Heart right ventricle (tissue), 16 donors: ENCODE measurements at regions of chr16 and their contacts with region 1.

Region 1: DNA sequence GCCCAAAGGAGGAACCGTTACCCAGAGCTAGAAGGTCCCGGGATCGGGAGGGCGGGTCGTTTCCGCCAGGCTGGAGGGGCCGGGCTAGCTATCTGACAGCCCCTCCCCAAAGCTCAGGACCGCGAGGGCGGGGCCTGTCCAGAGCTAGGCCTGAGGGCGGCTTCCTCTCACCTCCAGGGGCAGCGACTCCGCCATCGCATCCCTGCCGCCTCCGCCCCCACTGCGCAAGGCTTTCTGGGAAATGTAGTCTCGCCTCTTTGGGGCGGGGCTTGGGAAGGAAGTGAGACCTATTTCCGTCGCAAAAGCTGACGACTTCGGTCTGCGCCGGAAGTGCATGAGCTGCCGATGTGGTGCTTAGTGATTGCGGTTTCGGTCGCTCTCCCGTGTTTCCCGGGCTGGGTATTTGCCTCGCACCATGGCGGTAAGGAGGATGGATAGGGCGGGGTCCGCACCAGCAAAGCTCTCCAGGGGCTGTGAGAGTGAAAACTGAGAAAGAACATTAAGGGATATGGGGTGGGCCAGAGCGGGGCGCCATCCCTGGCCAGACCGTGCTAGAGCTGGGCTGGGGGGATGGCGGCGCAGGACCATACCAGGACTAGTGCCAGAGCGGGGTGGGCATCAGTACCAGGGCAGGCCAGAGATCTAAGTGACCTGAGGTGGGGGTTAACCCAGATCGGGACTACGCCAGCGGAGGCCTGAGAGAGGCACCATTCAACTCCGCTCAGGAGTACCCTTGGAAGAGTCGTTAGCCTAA is at the start of gene TMEM208:
- DNase-seq: peak; percentile 97 to 98
- ATAC-seq: peak; percentile 94 to 98 (median 97)
- H3K4me3 ChIP-seq: peak within 1 kb of the TSS; percentile 70 to 99 (median 92)
- H3K27ac ChIP-seq: peak within 1 kb of the TSS; percentile 59 to 93 (median 88)
- H3K4me1 ChIP-seq: peaks cover 5 to 39% (median 29%) of the 10 kb centered on the region in 9 donors
- H3K27me3 ChIP-seq: no peaks in the 10 kb centered on the region
- CTCF ChIP-seq: peak in 4 of 9 donors; percentile 20 to 42 (median 31)
- total RNA-seq, gene TMEM208: 7.6 to 22.1 (median 11.7) TPM

Region 2: DNA sequence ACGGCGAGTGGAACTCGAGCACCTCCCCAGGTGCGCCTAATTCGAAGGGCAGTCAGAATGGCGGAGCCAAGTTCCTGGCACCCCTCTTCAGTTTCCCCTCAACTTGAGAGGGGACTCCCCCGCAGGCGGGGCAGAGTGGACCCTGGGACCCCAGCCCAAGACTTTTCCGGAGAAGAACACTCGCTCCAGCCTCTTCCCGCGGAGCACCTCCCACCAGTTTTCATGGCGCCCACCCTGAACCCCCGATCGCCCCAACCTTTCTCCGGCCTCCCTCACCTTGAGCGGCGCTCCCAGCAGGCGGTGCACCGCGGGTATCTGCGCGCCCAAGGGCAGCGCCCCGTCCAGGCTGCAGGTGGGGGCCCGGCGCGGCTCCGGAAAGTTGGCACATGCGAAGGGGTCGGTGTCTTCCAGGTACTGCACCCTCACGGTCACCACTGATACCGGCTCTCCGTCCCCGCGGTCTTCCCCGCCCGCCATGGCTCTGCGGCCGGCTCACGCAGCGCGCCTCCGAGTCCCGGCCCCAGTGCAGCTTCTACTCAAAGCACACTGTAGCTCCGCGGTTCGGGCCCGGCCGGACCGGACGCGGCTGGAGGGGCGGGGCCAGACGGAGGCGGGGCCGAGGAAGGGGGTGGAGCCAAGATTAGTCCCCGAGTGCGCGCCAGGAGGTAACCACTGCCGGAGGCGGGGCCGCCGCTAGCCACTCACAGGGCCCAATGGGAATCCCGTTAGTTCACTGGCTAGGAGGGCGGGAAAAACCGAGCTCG is 20.1 kb after region 1 on chr16 and contains the start of gene FHOD1:
- intact Hi-C with region 1: loop called in 1 of 10 experiments (anchors 2 kb)
- DNase-seq: peak; percentile 98 to 99
- ATAC-seq: peak; percentile 77 to 89 (median 83)
- H3K4me3 ChIP-seq: peak within 1 kb of the TSS; percentile 69 to 97 (median 84)
- H3K27ac ChIP-seq: peak within 1 kb of the TSS; percentile 93 to 99 (median 96)
- H3K4me1 ChIP-seq: peaks cover 25 to 69% (median 58%) of the 10 kb centered on the region in 9 donors
- H3K27me3 ChIP-seq: peaks cover 0 to 34% (median 0%) of the 10 kb centered on the region in 7 donors
- CTCF ChIP-seq: peak in 1 of 9 donors; percentile 6
- total RNA-seq, gene FHOD1: 11.6 to 26.2 (median 19.1) TPM